Posterior cingulate gyrus (tissue), 11 donors: ENCODE measurements at regions of chr3 and their contacts with region 1.

Region 1: GRCh38 chr3:42961633-42962032 is 17.5 kb upstream of the GASK1A start:
- DNase-seq: peak in 4 of 10 donors; percentile 19 to 33 (median 31)

Region 2: GRCh38 chr3:43062564-43063040 is 101.0 kb after region 1 on chr3:
- intact Hi-C with region 1: no loop called
- DNase-seq: no peak

Region 3: GRCh38 chr3:43094851-43095250 is 133.2 kb after region 1 on chr3:
- intact Hi-C with region 1: loop called (anchors 10 kb)
- DNase-seq: no peak

Region 4: DNA sequence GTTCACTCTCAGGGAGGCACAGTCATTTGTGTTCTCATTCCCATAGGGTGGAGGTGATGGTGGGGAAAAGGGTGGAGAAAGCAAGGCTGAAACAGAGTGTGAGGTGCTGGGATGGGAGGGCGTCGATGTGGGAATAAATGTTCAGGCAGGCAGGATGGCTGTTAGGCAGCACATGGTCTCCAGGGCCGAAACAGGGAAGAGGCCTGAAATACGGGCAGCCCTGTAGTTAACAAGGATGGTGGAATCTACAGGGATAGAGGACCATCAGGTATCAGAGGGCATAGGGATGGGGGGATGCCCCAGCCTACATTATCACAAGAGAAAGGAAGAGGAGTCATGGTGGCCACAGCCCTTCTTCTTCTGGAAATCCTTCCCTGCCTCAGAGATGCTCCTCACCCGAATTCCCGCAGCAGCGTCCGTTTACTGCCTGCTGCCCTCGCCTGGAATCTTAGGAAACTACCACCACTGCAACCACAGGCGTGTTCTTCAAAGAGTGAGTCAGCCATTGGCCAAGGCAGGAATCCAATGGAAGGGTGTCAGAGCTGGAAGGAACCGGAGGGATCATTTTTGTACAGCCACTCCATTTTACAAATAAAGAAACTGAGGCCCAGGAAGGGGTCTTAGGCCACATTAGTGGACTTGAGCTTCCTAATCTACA is 194.0 kb after region 1 on chr3:
- intact Hi-C with region 1: loop called (anchors 2 kb)
- DNase-seq: peak; percentile 42 to 93 (median 66)

Region 5: GRCh38 chr3:43162230-43163084 is 200.8 kb after region 1 on chr3:
- intact Hi-C with region 1: loop called (anchors 2 kb)
- DNase-seq: peak in 1 of 10 donors; percentile 71

Region 6: DNA sequence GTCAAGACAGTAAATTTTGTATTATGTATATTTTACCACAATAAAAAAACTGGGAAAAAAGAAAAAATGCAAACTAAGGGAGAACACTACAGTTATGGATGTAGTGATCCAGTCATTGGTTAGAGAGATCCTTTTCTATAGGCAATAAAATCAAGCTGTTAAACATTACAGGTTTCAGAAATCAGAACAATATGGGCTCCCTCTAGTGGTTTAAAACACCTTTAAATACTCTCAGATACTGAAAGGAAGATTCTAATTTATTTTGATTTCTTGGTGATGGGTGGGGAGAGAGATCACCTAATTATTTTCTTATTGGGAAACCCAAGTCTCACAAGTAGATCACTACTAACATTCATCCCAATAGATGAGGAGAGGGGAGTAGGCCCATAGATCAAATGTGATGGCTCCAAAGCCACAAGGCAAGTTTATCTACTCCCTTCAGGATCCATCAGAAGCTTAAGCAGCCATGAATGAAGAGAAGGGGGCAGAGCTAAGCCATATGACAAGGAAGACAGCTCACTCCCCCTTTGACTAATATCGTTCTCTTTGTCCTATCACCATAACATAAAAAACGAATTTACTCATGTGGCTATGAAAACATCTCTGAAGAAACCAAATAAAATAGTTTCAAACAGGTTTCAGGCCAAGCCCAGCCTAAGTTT is 541.6 kb after region 1 on chr3:
- intact Hi-C with region 1: loop called (anchors 5 kb)
- DNase-seq: no peak